ENCODE measurements at regions of chr19 and their contacts with region 1.

Region 1: DNA sequence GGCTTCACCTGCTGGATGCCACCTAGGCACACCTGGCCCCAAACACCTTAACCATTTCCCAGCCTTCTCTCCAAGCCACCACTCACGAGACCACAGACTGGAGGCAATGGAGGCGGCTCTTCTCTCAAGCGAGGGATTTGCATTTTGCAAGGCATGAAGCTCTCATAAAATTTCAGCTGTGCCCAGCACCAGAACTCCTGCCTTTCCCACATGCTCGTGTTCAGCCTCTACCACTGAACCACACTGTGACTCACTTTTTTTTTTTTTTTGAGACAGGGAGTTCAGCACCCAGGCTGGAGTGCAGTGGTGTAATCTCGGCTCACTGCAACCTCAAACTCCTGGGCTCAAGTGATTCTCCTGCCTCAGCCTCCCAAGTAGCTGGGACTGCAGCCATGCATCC is 10.6 kb downstream of the NANOS3 start:
- DNase-seq: no peak
- H3K4me3 Mint-ChIP-seq: no peak overlapping the region
- H3K27ac Mint-ChIP-seq: peak overlapping the region; percentile 25
- H3K4me1 Mint-ChIP-seq: peaks cover 23% of the 10 kb centered on the region
- H3K27me3 Mint-ChIP-seq: no peaks in the 10 kb centered on the region

Region 2: GRCh38 chr19:13784731-13785452 is 102.6 kb before region 1 on chr19:
- CTCF ChIA-PET with region 1: interaction called, 10 read pairs
- POLR2A ChIA-PET with region 1: no interaction called
- DNase-seq: peak; percentile 75
- H3K4me3 Mint-ChIP-seq: no peak overlapping the region
- H3K27ac Mint-ChIP-seq: peak overlapping the region; percentile 57
- H3K4me1 Mint-ChIP-seq: peaks cover 35% of the 10 kb centered on the region
- H3K27me3 Mint-ChIP-seq: no peaks in the 10 kb centered on the region

Region 3: DNA sequence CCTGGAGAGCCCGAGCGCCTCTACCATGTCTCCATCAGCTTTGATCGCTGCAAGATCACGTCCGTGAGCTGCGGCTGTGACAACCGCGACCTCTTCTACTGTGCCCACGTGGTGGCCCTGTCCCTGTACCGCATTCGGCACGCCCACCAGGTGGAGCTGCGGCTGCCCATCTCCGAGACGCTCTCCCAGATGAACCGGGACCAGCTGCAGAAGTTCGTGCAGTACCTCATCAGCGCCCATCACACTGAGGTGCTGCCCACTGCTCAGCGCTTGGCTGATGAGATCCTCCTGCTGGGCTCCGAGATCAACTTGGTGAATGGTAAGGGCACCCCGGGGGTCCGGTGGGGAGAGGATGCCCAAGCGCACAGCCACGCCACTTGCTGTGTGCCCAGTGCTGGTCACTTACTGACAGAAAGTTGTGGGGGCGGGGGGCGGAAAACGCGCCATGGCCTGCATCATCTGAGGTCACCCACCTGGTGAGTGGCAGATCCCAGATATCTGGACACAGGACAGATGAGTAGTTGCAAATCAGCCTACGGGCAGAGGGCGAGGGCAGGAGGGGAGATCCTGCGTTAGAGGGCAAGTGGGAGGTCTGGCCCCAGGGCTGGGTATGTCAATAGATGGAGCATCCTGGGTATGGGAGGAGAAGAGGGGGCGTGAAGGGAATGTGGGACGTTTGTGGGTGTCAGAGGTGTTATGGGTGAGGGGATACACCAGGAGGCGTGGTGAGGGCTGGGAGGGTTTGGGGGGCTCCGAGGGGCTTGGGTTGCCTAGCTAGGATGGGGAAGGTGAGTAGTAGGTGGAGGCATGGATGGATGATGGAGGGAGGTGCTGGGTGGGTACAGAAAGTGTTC is 82.5 kb before region 1 on chr19:
- CTCF ChIA-PET with region 1: no interaction called
- POLR2A ChIA-PET with region 1: no interaction called
- DNase-seq: no peak
- H3K4me3 Mint-ChIP-seq: no peak overlapping the region
- H3K27ac Mint-ChIP-seq: peak overlapping the region; percentile 9
- H3K4me1 Mint-ChIP-seq: peaks cover 2% of the 10 kb centered on the region
- H3K27me3 Mint-ChIP-seq: no peaks in the 10 kb centered on the region

Region 4: DNA sequence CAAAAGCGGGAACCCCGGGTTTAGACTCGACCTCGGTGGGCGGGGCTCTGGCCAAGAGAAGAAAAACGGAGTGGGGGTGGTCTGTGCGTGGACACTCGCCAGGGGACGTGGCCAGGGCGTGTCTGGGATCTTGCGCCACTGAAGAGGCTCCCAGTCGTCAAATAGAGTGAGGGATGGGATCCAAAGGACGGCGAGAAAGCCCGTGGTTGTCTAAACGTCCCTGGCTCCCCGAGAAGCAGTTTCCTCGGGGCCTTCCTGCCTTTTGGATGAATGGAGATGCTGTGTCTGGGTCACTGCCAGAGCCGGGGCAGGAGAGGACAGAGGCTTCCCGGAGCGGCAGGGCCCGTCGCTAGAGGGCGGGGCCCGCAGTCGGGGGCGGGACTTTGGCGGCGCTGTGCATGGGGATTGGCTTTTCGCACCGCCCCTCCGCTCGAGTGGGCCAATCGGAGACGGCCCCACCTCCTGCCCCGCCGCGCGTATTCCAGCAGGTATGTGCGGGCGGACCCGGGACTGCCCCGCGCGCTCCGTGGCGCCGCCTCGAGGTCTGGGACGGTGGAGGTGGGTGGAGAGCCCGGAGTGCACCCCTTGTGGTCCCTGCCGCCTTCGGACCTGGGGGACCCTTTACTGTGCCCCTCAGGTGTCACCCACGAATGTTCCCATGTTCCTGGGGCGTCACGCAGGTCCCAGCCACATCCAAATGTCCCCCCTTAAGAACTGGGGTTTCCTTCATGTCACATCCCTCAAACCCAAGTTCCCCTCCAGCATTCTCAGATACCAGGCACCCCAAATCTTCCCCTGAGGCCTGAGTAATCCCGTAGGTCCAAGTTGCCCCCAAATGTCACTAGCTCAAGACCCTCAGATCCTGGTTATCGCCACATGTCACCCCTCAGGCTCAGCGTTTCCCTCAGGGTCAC is 53.9 kb before region 1 on chr19:
- CTCF ChIA-PET with region 1: no interaction called
- POLR2A ChIA-PET with region 1: no interaction called
- DNase-seq: peak; percentile 90
- H3K4me3 Mint-ChIP-seq: peak overlapping the region; percentile 72
- H3K27ac Mint-ChIP-seq: peak overlapping the region; percentile 83
- H3K4me1 Mint-ChIP-seq: peaks cover 47% of the 10 kb centered on the region
- H3K27me3 Mint-ChIP-seq: no peaks in the 10 kb centered on the region

Region 5: DNA sequence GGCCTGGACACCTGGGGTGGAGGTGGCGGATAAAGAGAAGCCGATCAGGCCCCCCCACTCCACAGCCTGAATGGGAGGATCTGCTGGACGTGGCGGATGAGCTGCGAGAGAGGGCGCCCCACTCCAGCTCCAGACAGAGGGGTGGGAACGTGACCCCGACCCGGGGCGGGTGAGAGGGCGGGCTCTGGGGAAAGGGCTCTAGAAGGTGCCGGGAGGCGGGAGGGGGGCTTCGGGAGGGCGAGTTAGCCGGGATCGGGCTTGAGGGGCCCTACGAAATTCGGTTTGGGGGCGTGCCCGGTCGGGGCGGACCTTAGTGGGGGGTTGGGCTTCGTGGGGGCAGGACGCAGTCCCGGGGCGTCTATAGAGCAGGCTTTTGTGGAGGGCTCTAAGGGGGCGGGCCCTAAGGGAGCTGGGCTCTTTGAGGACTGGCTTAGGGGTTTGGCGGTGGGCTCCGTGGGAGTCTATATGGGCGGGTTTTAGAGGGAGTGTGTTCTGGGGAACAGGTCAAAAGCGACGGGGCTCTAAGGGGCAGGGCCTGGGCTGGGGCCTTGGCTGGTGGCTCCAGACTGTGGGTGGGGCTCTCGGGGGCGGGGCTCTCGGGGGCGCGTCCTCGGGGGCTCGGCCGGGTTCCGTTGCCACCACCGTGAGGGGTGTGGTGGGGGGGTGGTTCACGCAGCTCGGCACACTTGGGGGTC is 14.7 kb before region 1 on chr19:
- CTCF ChIA-PET with region 1: no interaction called
- POLR2A ChIA-PET with region 1: no interaction called
- DNase-seq: peak; percentile 37
- H3K4me3 Mint-ChIP-seq: peak overlapping the region; percentile 50
- H3K27ac Mint-ChIP-seq: no peak overlapping the region
- H3K4me1 Mint-ChIP-seq: peaks cover 5% of the 10 kb centered on the region
- H3K27me3 Mint-ChIP-seq: peaks cover 7% of the 10 kb centered on the region